CD8-positive, alpha-beta T cell (primary cell): ENCODE measurements at regions of chr10 and their contacts with region 1.

Region 1: GRCh38 chr10:29455095-29455494 is 166.2 kb downstream of the LYZL1 start:
- DNase-seq: no peak
- ATAC-seq: no peak
- H3K4me3 ChIP-seq: no peak overlapping the region
- H3K4me3 Mint-ChIP-seq: no peak overlapping the region
- H3K27ac ChIP-seq: no peak overlapping the region
- H3K27ac Mint-ChIP-seq: peak overlapping the region; percentile 11
- H3K4me1 ChIP-seq: no peaks in the 10 kb centered on the region
- H3K4me1 Mint-ChIP-seq: no peaks in the 10 kb centered on the region
- H3K27me3 ChIP-seq: no peaks in the 10 kb centered on the region
- H3K27me3 Mint-ChIP-seq: no peaks in the 10 kb centered on the region
- CTCF ChIP-seq: no peak

Region 2: DNA sequence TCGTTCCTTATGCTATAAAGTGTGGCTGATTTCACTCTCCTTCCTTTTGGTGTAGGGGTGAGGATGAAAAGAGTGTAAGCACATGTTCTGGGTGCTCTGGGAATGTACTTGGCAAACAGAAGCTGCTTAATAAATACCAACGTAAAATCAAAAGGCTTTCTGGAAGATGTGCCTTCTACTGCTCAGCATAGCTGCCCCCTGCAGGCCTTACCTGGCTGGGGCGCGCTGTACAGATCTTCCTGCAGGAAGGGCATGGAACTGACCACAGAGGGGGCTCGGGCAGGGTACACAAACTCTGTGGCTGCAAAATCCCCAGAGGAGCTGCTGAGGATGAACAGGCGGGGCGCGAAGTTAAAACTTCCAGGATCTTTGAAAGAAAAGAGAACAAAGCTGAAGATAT is 10.3 kb after region 1 on chr10:
- CTCF ChIA-PET with region 1: interaction called, 10 read pairs
- POLR2A ChIA-PET with region 1: no interaction called
- intact Hi-C with region 1: no loop called
- DNase-seq: no peak
- ATAC-seq: no peak
- H3K4me3 ChIP-seq: no peak overlapping the region
- H3K4me3 Mint-ChIP-seq: no peak overlapping the region
- H3K27ac ChIP-seq: no peak overlapping the region
- H3K27ac Mint-ChIP-seq: no peak overlapping the region
- H3K4me1 ChIP-seq: no peaks in the 10 kb centered on the region
- H3K4me1 Mint-ChIP-seq: no peaks in the 10 kb centered on the region
- H3K27me3 ChIP-seq: no peaks in the 10 kb centered on the region
- H3K27me3 Mint-ChIP-seq: no peaks in the 10 kb centered on the region
- CTCF ChIP-seq: no peak

Region 3: GRCh38 chr10:29482591-29483431 is 27.7 kb after region 1 on chr10:
- CTCF ChIA-PET with region 1: no interaction called
- POLR2A ChIA-PET with region 1: no interaction called
- intact Hi-C with region 1: loop called in 1 of 2 experiments (anchors 1 kb)
- DNase-seq: peak in 6 of 9 experiments; percentile 20 to 53 (median 34)
- ATAC-seq: peak; percentile 63
- H3K4me3 ChIP-seq: no peak overlapping the region
- H3K4me3 Mint-ChIP-seq: peak overlapping the region; percentile 27
- H3K27ac ChIP-seq: peak overlapping the region in 1 of 2 experiments; percentile 8
- H3K27ac Mint-ChIP-seq: peak overlapping the region; percentile 8
- H3K4me1 ChIP-seq: peaks cover 22% of the 10 kb centered on the region
- H3K4me1 Mint-ChIP-seq: peaks cover 30% of the 10 kb centered on the region
- H3K27me3 ChIP-seq: no peaks in the 10 kb centered on the region
- H3K27me3 Mint-ChIP-seq: no peaks in the 10 kb centered on the region
- CTCF ChIP-seq: no peak

Region 4: DNA sequence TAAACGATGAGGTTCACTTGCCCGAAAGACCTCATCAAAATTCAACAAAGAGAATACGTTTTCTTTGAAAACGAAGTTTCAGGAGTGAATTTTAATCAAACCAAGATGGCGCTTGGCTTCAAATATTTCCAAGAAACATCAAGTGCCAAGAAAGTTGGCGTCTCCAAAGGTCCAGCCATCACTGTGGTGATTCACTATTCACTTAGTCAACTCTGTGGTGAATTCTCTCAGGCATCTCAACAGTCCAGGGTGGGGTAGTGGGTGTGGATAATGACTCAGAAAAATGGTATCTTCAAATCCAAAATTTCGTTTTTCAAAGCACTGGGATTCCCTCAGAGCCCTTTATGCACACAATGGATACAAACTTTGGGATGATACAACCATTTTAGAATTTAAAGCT is 46.6 kb after region 1 on chr10:
- CTCF ChIA-PET with region 1: no interaction called
- POLR2A ChIA-PET with region 1: no interaction called
- intact Hi-C with region 1: no loop called
- DNase-seq: no peak
- ATAC-seq: no peak
- H3K4me3 ChIP-seq: no peak overlapping the region
- H3K4me3 Mint-ChIP-seq: no peak overlapping the region
- H3K27ac ChIP-seq: no peak overlapping the region
- H3K27ac Mint-ChIP-seq: no peak overlapping the region
- H3K4me1 ChIP-seq: no peaks in the 10 kb centered on the region
- H3K4me1 Mint-ChIP-seq: no peaks in the 10 kb centered on the region
- H3K27me3 ChIP-seq: no peaks in the 10 kb centered on the region
- H3K27me3 Mint-ChIP-seq: no peaks in the 10 kb centered on the region
- CTCF ChIP-seq: no peak